SK-N-SH (cell line): ENCODE measurements at regions of chr13 and their contacts with region 1.

Region 1: DNA sequence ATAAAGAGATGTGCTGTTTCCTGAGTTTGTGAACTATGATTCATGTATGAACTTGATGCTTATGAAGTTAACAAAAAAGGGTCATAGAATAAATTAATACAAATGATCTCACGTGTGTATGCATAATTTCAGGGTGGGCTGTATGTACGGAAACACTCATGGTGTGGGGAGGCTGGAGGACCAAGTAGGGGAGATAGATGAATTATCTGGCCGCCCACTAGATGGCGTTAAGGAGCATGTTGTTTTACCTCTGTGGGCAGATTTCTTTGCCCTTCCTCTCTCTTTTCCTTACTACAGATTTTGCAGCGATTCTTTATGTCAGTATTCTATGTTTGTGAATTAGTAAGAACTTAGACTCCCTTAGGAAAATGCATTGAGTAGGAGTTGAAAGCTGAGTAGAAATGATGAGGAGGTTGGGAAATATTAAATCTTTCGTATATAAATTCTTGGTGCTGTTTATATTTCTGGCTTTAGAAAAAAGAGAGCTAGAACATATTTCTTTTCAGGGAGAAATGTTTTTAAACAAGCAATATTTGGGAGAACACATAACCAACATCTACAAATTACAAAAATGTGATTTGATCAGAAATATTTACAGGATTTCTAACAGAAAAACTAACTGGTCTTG is 47.4 kb upstream of the TMTC4 start:
- DNase-seq: peak; percentile 63
- H3K4me3 ChIP-seq: no peak overlapping the region
- H3K27ac ChIP-seq: no peak overlapping the region
- H3K4me1 ChIP-seq: no peaks in the 10 kb centered on the region
- H3K27me3 ChIP-seq: no peaks in the 10 kb centered on the region; the same call in 1 of the 2 replicates
- CTCF ChIP-seq: peak; percentile 75
- EP300 ChIP-seq: no peak
- RAD21 ChIP-seq: peak; percentile 69

Region 2: DNA sequence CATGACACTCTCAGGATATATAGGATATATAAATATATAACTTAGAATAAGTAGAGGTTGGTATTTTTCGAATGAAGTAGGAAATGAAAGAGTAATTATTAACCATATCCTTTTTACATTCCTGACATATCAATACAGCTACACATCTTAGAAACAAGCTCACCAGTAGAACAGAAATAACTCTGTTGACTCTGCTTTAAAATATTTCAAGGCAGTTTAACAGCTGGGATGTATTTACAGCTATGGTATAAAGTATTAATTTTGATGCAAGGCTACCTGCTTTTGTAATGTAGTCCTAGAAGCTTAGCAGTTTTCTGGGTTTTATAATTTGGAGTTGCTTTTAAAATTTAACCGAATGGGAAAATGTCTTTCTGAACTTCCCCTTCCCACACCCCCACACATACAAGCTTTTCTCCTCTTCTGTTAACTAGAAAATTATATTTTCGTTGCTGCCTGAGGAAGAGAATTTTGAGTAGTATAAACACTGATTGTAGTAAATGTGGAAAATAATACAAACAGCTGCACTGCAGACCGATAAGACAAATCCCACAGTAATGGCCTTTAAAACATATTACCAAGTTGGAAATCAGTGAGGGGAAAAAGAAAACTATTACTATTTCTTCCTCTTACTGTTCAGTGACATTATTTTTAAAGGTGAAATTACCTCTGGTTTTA is 281.1 kb before region 1 on chr13:
- CTCF ChIA-PET with region 1: no interaction called
- POLR2A ChIA-PET with region 1: no interaction called
- DNase-seq: no peak
- H3K4me3 ChIP-seq: no peak overlapping the region; a peak in 1 of 4 replicates
- H3K27ac ChIP-seq: peak overlapping the region; percentile 72; a peak in 3 of 4 replicates
- H3K4me1 ChIP-seq: peaks cover 0 to 20% of the 10 kb centered on the region in 2 experiments; a peak in 1 of 4 replicates
- H3K27me3 ChIP-seq: no peaks in the 10 kb centered on the region
- CTCF ChIP-seq: no peak
- EP300 ChIP-seq: peak in 1 of 2 experiments; percentile 68; a peak in 1 of 4 replicates
- RAD21 ChIP-seq: no peak

Region 3: DNA sequence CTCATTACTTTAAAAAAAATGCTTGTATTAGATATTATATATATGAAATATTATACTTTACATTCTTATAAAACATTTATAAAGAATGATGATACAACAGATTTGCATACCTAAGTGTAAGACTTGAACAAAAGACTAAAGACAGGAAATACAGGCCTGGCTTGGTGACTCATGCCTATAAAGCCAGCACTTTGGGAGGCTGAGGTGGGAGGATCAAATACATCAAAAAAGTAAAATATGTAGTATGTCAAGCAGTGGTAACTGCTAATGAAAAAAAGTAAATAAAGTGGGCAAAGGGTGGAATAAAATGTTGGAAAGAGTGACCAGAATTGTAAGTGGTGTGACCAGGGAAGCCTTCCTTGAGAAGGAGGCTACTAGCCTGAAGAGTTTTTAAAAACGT is 267.1 kb before region 1 on chr13:
- CTCF ChIA-PET with region 1: no interaction called
- POLR2A ChIA-PET with region 1: no interaction called
- DNase-seq: no peak
- H3K4me3 ChIP-seq: no peak overlapping the region
- H3K27ac ChIP-seq: no peak overlapping the region
- H3K4me1 ChIP-seq: no peaks in the 10 kb centered on the region
- H3K27me3 ChIP-seq: no peaks in the 10 kb centered on the region
- CTCF ChIP-seq: no peak
- EP300 ChIP-seq: no peak
- RAD21 ChIP-seq: no peak

Region 4: GRCh38 chr13:100734194-100734720 is 12.3 kb after region 1 on chr13:
- CTCF ChIA-PET with region 1: interaction called, 12 read pairs
- POLR2A ChIA-PET with region 1: no interaction called
- DNase-seq: no peak
- H3K4me3 ChIP-seq: no peak overlapping the region
- H3K27ac ChIP-seq: no peak overlapping the region
- H3K4me1 ChIP-seq: no peaks in the 10 kb centered on the region
- H3K27me3 ChIP-seq: no peaks in the 10 kb centered on the region
- CTCF ChIP-seq: no peak
- EP300 ChIP-seq: no peak
- RAD21 ChIP-seq: no peak

Region 5: GRCh38 chr13:101098873-101099272 is 376.9 kb after region 1 on chr13:
- CTCF ChIA-PET with region 1: interaction called, 16 read pairs
- POLR2A ChIA-PET with region 1: no interaction called
- DNase-seq: no peak
- H3K4me3 ChIP-seq: no peak overlapping the region
- H3K27ac ChIP-seq: no peak overlapping the region; a peak in 1 of 4 replicates
- H3K4me1 ChIP-seq: no peaks in the 10 kb centered on the region
- H3K27me3 ChIP-seq: no peaks in the 10 kb centered on the region
- CTCF ChIP-seq: no peak
- EP300 ChIP-seq: no peak; a peak in 1 of 4 replicates
- RAD21 ChIP-seq: no peak

Region 6: GRCh38 chr13:101127741-101128353 is 405.8 kb after region 1 on chr13:
- CTCF ChIA-PET with region 1: interaction called, 23 read pairs
- POLR2A ChIA-PET with region 1: no interaction called
- DNase-seq: peak; percentile 53
- H3K4me3 ChIP-seq: no peak overlapping the region; a peak in 1 of 4 replicates
- H3K27ac ChIP-seq: no peak overlapping the region
- H3K4me1 ChIP-seq: no peaks in the 10 kb centered on the region
- H3K27me3 ChIP-seq: no peaks in the 10 kb centered on the region
- CTCF ChIP-seq: peak; percentile 92
- EP300 ChIP-seq: no peak
- RAD21 ChIP-seq: peak; percentile 84

Region 7: GRCh38 chr13:101211261-101211660 is 489.3 kb after region 1 on chr13:
- CTCF ChIA-PET with region 1: no interaction called
- POLR2A ChIA-PET with region 1: no interaction called
- DNase-seq: no peak
- H3K4me3 ChIP-seq: no peak overlapping the region
- H3K27ac ChIP-seq: peak overlapping the region; percentile 73 to 75; a peak in 3 of 4 replicates
- H3K4me1 ChIP-seq: peaks cover 2 to 21% of the 10 kb centered on the region in 2 experiments
- H3K27me3 ChIP-seq: no peaks in the 10 kb centered on the region
- CTCF ChIP-seq: no peak
- EP300 ChIP-seq: peak in 1 of 2 experiments; percentile 86; a peak in 3 of 4 replicates
- RAD21 ChIP-seq: no peak